Dorsolateral prefrontal cortex (tissue), 120 donors: ENCODE measurements at regions of chr11 and their contacts with region 1.

Region 1: GRCh38 chr11:66694732-66695207 is 17.1 kb upstream of the RBM4B start:
- DNase-seq: peak; percentile 72 to 91 (median 86)
- H3K4me3 ChIP-seq: no peak overlapping the region
- H3K27ac ChIP-seq: peak overlapping the region in 26 of 59 donors; percentile 0 to 80 (median 36)
- H3K27me3 ChIP-seq: no peaks in the 10 kb centered on the region
- CTCF ChIP-seq: peak; percentile 88 to 98 (median 94)

Region 2: GRCh38 chr11:66718320-66719036 is 23.7 kb after region 1 on chr11:
- intact Hi-C with region 1: no loop called
- DNase-seq: no peak
- H3K4me3 ChIP-seq: peak overlapping the region in 2 of 59 donors; percentile 1
- H3K27ac ChIP-seq: peak overlapping the region in 13 of 59 donors; percentile 3 to 76 (median 36)
- H3K27me3 ChIP-seq: no peaks in the 10 kb centered on the region
- CTCF ChIP-seq: no peak

Region 3: DNA sequence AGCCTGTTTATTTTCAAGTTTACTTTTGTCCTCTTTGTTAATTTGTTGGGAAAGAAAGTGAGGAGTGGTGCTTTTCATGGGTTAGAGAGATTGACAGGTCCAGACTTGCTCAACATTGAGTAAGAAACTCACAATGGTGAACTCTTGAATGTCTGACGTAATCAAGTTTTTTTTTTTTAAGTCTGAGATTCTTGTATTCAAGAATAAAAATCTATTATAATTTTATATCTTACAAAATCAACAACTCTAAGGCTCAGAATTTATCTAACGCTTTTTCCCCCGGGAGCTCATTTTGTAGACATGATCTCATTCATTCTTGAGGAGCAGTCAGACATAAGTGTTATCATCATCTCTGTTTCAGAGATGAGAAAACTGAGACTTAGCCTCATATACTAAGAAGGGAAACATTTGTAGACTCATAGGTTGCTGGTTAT is 73.3 kb after region 1 on chr11:
- intact Hi-C with region 1: no loop called
- DNase-seq: no peak
- H3K4me3 ChIP-seq: no peak overlapping the region
- H3K27ac ChIP-seq: no peak overlapping the region
- H3K27me3 ChIP-seq: no peaks in the 10 kb centered on the region
- CTCF ChIP-seq: no peak

Region 4: DNA sequence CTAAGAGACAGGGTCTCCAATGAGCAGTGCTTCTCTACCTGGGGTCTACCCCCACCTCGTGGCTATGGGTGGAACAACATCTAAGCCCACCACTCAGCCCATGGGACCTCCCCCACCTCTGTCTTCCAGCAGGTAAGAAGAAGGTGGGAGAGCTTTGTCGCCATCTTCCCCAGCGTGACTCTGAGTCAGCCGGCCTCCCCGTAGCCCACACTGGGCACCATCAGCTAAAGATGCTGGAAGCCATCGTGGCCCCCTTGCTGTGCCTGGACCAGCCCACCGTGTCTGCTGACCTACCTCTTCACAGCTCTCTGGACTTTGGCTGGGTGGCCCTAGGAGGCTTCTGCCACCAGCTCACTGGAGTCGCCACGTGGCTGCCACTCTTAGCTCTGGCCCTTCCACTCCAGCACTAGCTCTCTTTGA is 281.3 kb after region 1 on chr11:
- intact Hi-C with region 1: loop called (anchors 5 to 10 kb)
- DNase-seq: no peak
- H3K4me3 ChIP-seq: no peak overlapping the region
- H3K27ac ChIP-seq: no peak overlapping the region
- H3K27me3 ChIP-seq: no peaks in the 10 kb centered on the region
- CTCF ChIP-seq: peak in 51 of 56 donors; percentile 17 to 68 (median 52)